IMR-90 (cell line): ENCODE measurements at regions of chr1 and their contacts with region 1.

Region 1: DNA sequence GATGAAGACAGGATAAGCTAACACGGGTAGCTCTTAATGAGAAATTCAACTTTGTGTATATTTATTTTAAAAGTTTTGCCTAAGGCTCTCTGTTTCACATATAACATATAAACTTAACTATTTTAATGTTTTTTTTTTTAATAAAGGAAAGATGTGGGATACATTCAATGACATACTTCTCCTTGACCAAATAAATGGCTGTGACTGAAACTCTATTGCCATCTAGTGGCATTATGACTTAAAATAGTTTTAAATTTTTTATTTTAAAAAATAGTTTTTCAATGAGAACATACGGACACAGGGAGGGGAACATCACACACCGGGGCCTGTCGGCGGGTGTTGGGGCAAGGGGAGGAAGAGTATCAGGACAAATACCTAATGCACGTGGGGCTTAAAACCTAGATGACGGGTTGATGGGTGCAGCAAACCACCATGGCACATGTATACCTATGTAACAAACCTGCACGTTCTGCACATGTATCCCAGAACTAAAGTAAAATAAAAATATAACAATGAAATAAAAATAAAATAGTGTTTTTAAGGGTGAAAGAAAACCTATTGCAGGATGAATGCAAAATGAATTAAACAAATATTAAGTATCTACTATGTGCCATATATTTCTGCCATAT is 83.4 kb downstream of the LYST start:
- DNase-seq: peak; percentile 73
- ATAC-seq: peak; percentile 78
- H3K4me3 ChIP-seq: no peak overlapping the region
- H3K27ac ChIP-seq: no peak overlapping the region
- H3K4me1 ChIP-seq: peaks cover 6% of the 10 kb centered on the region
- H3K27me3 ChIP-seq: no peaks in the 10 kb centered on the region
- CTCF ChIP-seq: peak; percentile 70
- POLR2A ChIP-seq: 0 out of 2 replicates have a peak, but pooled peaks have one; percentile 31
- RAD21 ChIP-seq: peak; percentile 80

Region 2: GRCh38 chr1:235597867-235598553 is 185.3 kb before region 1 on chr1:
- CTCF ChIA-PET with region 1: interaction called, 3 read pairs
- POLR2A ChIA-PET with region 1: no interaction called
- dilution Hi-C with region 1: no loop called
- in situ Hi-C with region 1: no loop called
- intact Hi-C with region 1: loop called (anchors 5 kb)
- DNase-seq: peak; percentile 62
- ATAC-seq: peak; percentile 60
- H3K4me3 ChIP-seq: no peak overlapping the region
- H3K27ac ChIP-seq: no peak overlapping the region
- H3K4me1 ChIP-seq: no peaks in the 10 kb centered on the region
- H3K27me3 ChIP-seq: peaks cover 2% of the 10 kb centered on the region; the same call in 1 of the 2 replicates
- CTCF ChIP-seq: peak; percentile 42
- POLR2A ChIP-seq: no peak
- RAD21 ChIP-seq: peak; percentile 44

Region 3: DNA sequence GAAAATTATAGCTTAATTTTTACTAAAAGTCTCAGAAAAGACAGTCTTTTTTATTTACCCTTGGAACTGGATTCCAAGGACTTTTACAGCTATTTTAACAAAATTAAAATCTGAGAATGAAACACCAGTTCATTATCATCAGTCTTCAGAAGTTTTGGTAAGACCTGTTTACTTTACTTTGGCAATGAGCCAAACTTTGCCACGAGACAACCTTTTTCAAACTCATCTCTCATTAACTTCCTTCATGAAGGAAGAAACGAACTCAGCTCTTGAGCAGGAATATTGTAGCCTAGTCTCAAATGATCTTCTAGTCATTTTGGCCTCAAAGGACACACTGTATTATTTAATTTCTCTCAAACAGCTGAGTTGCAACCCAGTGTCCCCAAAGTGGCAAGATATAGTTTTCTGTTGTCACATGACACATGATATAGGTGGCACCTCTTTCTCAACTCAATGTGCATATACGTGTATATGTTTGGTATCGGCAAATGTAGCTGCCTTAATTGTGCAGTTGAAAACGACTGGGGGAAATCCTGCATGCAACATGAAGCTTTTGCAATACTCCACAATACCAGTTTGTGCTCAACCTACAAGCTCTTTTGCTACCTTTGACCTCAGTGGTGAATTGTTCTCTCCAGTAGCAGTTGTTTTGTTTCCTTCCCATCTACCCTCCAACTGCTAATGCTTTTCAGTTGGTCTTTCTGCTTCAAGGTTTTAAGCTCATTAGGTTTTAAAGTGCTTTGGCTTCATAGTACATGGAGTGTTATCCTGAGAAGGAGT is 125.3 kb before region 1 on chr1:
- CTCF ChIA-PET with region 1: no interaction called
- POLR2A ChIA-PET with region 1: interaction called, 10 read pairs
- dilution Hi-C with region 1: no loop called
- in situ Hi-C with region 1: no loop called
- intact Hi-C with region 1: no loop called
- DNase-seq: no peak
- ATAC-seq: no peak
- H3K4me3 ChIP-seq: no peak overlapping the region
- H3K27ac ChIP-seq: no peak overlapping the region
- H3K4me1 ChIP-seq: no peaks in the 10 kb centered on the region
- H3K27me3 ChIP-seq: peaks cover 6% of the 10 kb centered on the region
- CTCF ChIP-seq: no peak
- POLR2A ChIP-seq: no peak
- RAD21 ChIP-seq: no peak

Region 4: GRCh38 chr1:235917267-235917811 is 134.1 kb after region 1 on chr1:
- CTCF ChIA-PET with region 1: no interaction called
- POLR2A ChIA-PET with region 1: no interaction called
- dilution Hi-C with region 1: no loop called
- in situ Hi-C with region 1: no loop called
- intact Hi-C with region 1: no loop called
- DNase-seq: peak; percentile 99
- ATAC-seq: peak; percentile 89
- H3K4me3 ChIP-seq: no peak overlapping the region
- H3K27ac ChIP-seq: peak overlapping the region; percentile 52
- H3K4me1 ChIP-seq: peaks cover 12% of the 10 kb centered on the region
- H3K27me3 ChIP-seq: no peaks in the 10 kb centered on the region
- CTCF ChIP-seq: no peak
- POLR2A ChIP-seq: no peak
- RAD21 ChIP-seq: no peak